Activated B cell treated with CpG ODN at 0.5 μM for 24 hours (primary cell): ENCODE measurements at regions of chr2 and their contacts with region 1.

Region 1: GRCh38 chr2:152635635-152636298 is 81.5 kb downstream of the PRPF40A start:
- DNase-seq: peak; percentile 36
- ATAC-seq: peak; percentile 70
- H3K4me3 Mint-ChIP-seq: no peak overlapping the region
- H3K27ac Mint-ChIP-seq: no peak overlapping the region
- H3K4me1 Mint-ChIP-seq: no peaks in the 10 kb centered on the region
- H3K27me3 Mint-ChIP-seq: no peaks in the 10 kb centered on the region
- CTCF ChIP-seq: no peak

Region 2: GRCh38 chr2:152036611-152037469 is 598.9 kb before region 1 on chr2:
- CTCF ChIA-PET with region 1: interaction called, 11 read pairs
- POLR2A ChIA-PET with region 1: no interaction called
- intact Hi-C with region 1: loop called (anchors 1 kb)
- DNase-seq: peak; percentile 19
- ATAC-seq: peak; percentile 50
- H3K4me3 Mint-ChIP-seq: no peak overlapping the region
- H3K27ac Mint-ChIP-seq: no peak overlapping the region
- H3K4me1 Mint-ChIP-seq: no peaks in the 10 kb centered on the region
- H3K27me3 Mint-ChIP-seq: no peaks in the 10 kb centered on the region
- CTCF ChIP-seq: peak; percentile 52

Region 3: DNA sequence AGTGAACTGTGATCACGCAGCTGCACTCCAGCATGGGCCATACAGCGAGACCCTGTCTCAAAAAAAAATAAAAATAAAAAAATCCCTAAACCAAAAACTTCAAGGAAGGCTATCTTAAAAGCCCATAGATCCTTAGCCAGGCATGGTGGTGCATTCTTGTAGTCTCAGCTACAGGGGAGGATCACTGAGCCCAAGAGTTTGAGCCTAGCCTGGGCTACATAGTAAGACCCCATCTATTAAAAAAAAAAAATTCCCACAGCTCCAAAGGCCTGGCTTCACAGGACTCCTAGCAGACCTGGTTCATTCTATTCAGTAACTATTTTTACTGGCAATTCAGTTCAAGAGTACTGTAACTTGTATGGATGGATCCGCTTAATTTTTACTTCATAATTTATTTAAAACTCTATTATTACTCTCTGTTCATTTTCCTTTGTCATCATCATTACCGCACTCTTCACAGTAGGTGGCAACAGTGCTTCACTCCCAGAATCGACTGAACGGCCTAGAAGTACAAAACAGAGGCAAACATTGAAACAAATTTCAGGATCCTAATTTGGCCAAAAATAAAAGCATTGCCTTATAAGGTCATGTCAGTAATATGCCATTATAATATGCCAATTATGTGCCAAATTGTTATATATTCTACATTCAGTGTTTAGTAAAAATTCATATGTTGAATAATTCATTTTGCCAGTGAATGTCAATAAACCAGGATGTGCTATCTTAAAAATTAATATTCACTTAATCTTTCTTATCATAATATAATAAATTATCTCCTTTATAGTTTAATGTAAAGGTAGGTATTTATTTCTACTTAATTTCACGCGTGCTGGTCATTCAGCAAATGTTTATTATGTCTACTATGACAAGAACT is 445.9 kb before region 1 on chr2:
- CTCF ChIA-PET with region 1: interaction called, 19 read pairs
- POLR2A ChIA-PET with region 1: no interaction called
- intact Hi-C with region 1: loop called (anchors 1 kb)
- DNase-seq: no peak
- ATAC-seq: peak; percentile 71
- H3K4me3 Mint-ChIP-seq: no peak overlapping the region
- H3K27ac Mint-ChIP-seq: no peak overlapping the region
- H3K4me1 Mint-ChIP-seq: no peaks in the 10 kb centered on the region
- H3K27me3 Mint-ChIP-seq: peaks cover 22% of the 10 kb centered on the region
- CTCF ChIP-seq: no peak